ENCODE measurements at regions of chr5 and their contacts with region 1.

Region 1: GRCh38 chr5:135950611-135951010 is 4.2 kb downstream of the LECT2 start:
- DNase-seq: no peak
- H3K4me3 ChIP-seq: no peak overlapping the region
- H3K27ac ChIP-seq: no peak overlapping the region
- H3K4me1 ChIP-seq: no peaks in the 10 kb centered on the region
- H3K27me3 ChIP-seq: no peaks in the 10 kb centered on the region
- CTCF ChIP-seq: no peak

Region 2: DNA sequence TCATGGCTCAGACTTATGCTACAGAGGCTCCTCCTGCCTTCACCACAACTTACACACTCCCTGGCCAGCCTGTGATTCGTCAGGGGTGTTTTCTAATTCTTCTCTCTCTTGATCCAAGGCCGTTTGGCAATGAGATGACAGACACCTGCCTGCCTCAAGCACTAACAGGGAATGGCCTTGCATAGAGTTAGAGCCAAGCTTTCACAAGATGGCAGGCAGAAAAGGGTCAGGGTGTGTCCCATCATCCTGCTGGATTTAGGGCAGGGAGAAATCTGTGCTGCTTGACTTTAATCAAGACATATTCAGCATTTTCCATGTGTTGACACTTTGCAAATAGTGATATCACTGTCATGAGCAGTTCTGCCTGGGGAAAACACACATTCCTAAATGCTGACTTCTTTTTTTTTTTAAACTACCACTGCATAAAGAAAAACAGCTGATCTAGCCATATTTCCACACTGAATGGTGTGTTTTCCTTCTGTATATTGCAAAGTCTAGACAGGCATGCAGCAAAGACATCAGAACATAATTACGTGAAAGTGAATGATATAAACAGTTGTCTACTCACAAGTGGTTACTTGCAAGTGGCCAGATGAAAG is 211.1 kb before region 1 on chr5:
- intact Hi-C with region 1: no loop called
- DNase-seq: peak in 1 of 5 donors; percentile 23
- H3K4me3 ChIP-seq: no peak overlapping the region
- H3K27ac ChIP-seq: no peak overlapping the region
- H3K4me1 ChIP-seq: no peaks in the 10 kb centered on the region
- H3K27me3 ChIP-seq: no peaks in the 10 kb centered on the region
- CTCF ChIP-seq: no peak

Region 3: DNA sequence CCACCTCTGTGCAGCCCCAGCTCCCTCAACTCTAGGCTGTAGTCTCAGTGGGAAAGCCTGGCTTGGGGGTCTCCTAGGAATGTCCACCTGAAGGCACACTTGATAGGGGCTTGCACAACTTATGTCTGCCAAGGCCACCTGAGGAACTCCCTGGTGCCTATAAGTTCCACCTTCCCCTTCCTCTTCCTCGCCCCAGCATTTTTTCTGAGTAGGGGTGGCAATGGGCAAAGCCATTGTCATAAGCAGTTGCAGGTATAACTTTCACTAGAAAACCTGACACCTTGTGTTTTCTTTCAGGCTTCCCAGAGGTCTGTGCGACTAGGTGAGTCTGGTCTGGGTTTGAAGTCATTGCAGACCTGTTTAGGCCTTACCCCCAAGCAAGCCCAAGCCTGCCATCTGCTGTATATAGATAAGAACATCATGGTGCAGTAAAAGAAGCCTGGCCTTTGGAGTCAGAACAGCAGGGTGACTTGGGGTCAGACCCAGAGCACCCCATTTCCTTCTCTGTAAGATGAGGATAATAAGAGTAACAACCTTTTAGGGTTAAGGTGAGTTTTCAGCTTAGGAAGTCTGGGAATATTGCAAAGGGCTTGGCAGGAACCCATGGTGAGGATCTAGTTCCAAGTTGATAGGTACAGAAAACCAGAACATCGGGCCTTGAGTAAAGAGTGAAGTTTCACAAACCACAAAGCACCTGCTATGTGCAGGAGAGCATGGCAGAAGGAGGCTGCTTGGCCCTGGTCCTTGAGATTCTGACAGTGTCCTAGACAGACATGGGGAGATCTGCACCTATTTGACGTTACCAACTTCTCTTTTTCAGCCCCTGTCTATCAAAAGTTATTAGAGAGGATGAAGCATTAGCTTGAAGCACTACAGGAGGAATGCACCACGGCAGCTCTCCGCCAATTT is 112.0 kb after region 1 on chr5:
- intact Hi-C with region 1: loop called (anchors 10 kb)
- DNase-seq: peak in 2 of 5 donors; percentile 30 to 50
- H3K4me3 ChIP-seq: no peak overlapping the region
- H3K27ac ChIP-seq: no peak overlapping the region
- H3K4me1 ChIP-seq: peaks cover 0 to 2% (median 0%) of the 10 kb centered on the region in 3 donors
- H3K27me3 ChIP-seq: no peaks in the 10 kb centered on the region
- CTCF ChIP-seq: peak; percentile 44

Region 4: GRCh38 chr5:136356747-136357469 is 406.3 kb after region 1 on chr5:
- intact Hi-C with region 1: no loop called
- DNase-seq: peak in 1 of 5 donors; percentile 68
- H3K4me3 ChIP-seq: no peak overlapping the region
- H3K27ac ChIP-seq: no peak overlapping the region
- H3K4me1 ChIP-seq: no peaks in the 10 kb centered on the region
- H3K27me3 ChIP-seq: no peaks in the 10 kb centered on the region
- CTCF ChIP-seq: no peak

Region 5: GRCh38 chr5:136584474-136584873 is 633.9 kb after region 1 on chr5:
- intact Hi-C with region 1: no loop called
- DNase-seq: no peak
- H3K4me3 ChIP-seq: no peak overlapping the region
- H3K27ac ChIP-seq: no peak overlapping the region
- H3K4me1 ChIP-seq: no peaks in the 10 kb centered on the region
- H3K27me3 ChIP-seq: no peaks in the 10 kb centered on the region
- CTCF ChIP-seq: no peak

Measured in kidney (tissue), 22 donors.